ENCODE measurements at regions of chr12 and their contacts with region 1.

Region 1: GRCh38 chr12:68610370-68611093 is at the start of gene RAP1B:
- DNase-seq: peak; percentile 87 to 96
- ATAC-seq: peak; percentile 76 to 94 (median 85)
- H3K4me3 ChIP-seq: peak within 1 kb of the TSS; percentile 100
- H3K4me3 Mint-ChIP-seq: peak within 1 kb of the TSS; percentile 98
- H3K27ac ChIP-seq: peak within 1 kb of the TSS; percentile 99
- H3K27ac Mint-ChIP-seq: peak within 1 kb of the TSS; percentile 84 to 95
- H3K4me1 ChIP-seq: peaks cover 19% of the 10 kb centered on the region
- H3K4me1 Mint-ChIP-seq: peaks cover 57 to 58% of the 10 kb centered on the region in 2 donors
- H3K27me3 ChIP-seq: no peaks in the 10 kb centered on the region
- H3K27me3 Mint-ChIP-seq: no peaks in the 10 kb centered on the region
- CTCF ChIP-seq: no peak
- total RNA-seq, gene RAP1B: 517 to 664 (median 572) TPM

Region 2: DNA sequence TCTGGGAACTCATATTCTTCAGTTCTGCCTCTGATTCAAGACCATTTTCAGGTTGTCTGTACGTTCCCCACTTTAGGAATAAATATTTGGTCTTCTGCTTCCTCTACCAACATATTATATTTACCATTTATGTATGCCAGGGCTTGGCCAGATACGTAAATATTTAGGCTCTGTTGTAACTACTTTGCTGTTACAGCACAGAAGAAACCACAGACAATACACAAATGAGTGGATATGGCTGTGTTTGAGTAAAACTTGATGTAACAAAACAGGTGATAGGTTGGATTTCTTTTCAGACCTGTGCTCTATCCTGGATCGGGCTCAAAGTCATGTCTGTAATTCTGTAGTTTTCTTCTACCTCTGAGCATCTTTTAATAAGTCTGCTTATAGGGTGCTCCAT is 37.6 kb after region 1 on chr12:
- intact Hi-C with region 1: loop called (anchors 5 kb)
- DNase-seq: no peak
- ATAC-seq: peak; percentile 50 to 64 (median 58)
- H3K4me3 ChIP-seq: no peak overlapping the region
- H3K4me3 Mint-ChIP-seq: peak overlapping the region; percentile 78
- H3K27ac ChIP-seq: peak overlapping the region; percentile 22
- H3K27ac Mint-ChIP-seq: peak overlapping the region; percentile 92 to 97
- H3K4me1 ChIP-seq: peaks cover 31% of the 10 kb centered on the region
- H3K4me1 Mint-ChIP-seq: peaks cover 64 to 65% of the 10 kb centered on the region in 2 donors
- H3K27me3 ChIP-seq: no peaks in the 10 kb centered on the region
- H3K27me3 Mint-ChIP-seq: no peaks in the 10 kb centered on the region
- CTCF ChIP-seq: no peak

Measured in natural killer cell (primary cell).